ENCODE measurements at regions of chr9 and their contacts with region 1.

Region 1: GRCh38 chr9:101119206-101119819 is 90.8 kb downstream of the PLPPR1 start:
- DNase-seq: peak in 1 of 2 experiments; percentile 92
- H3K4me3 ChIP-seq: no peak overlapping the region
- H3K27ac ChIP-seq: no peak overlapping the region
- H3K4me1 ChIP-seq: peaks cover 0 to 7% (median 3%) of the 10 kb centered on the region in 4 experiments; a peak in 4 of 7 replicates
- H3K27me3 ChIP-seq: no peaks in the 10 kb centered on the region
- CTCF ChIP-seq: peak; percentile 96 to 99 (median 98)
- EP300 ChIP-seq: no peak
- POLR2A ChIP-seq: no peak
- RAD21 ChIP-seq: peak; percentile 96 to 99

Region 2: GRCh38 chr9:101132801-101133200 is 13.5 kb after region 1 on chr9:
- CTCF ChIA-PET with region 1: interaction called, 23 read pairs
- POLR2A ChIA-PET with region 1: no interaction called
- DNase-seq: no peak
- H3K4me3 ChIP-seq: no peak overlapping the region
- H3K27ac ChIP-seq: no peak overlapping the region
- H3K4me1 ChIP-seq: peaks cover 2 to 5% (median 4%) of the 10 kb centered on the region in 4 experiments; a peak in 3 of 7 replicates
- H3K27me3 ChIP-seq: no peaks in the 10 kb centered on the region
- CTCF ChIP-seq: no peak
- EP300 ChIP-seq: no peak
- POLR2A ChIP-seq: no peak
- RAD21 ChIP-seq: no peak

Region 3: DNA sequence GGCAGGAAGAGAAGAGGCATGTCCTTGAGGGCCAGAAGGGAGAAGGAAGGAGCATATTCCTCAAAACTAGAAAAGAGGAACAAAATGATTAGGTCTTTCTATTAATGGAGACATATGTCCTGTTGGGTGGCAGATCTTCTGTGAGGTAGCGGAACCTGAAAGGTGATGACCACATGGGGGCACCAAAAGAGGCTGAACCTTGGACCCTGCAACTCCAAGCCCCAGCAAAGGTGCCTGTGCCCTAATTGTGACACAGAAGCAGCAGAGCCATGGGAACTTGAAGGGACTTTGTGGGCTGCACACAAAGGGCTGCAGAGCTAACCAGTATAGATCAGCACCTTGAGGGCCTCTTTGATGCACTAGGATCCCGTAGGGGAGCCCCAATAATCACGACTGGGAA is 107.5 kb after region 1 on chr9:
- CTCF ChIA-PET with region 1: interaction called, 70 read pairs
- POLR2A ChIA-PET with region 1: interaction called, 3 read pairs
- DNase-seq: no peak
- H3K4me3 ChIP-seq: no peak overlapping the region
- H3K27ac ChIP-seq: no peak overlapping the region
- H3K4me1 ChIP-seq: peaks cover 0 to 8% (median 0%) of the 10 kb centered on the region in 4 experiments; a peak in 2 of 7 replicates
- H3K27me3 ChIP-seq: no peaks in the 10 kb centered on the region
- CTCF ChIP-seq: peak in 2 of 3 experiments; percentile 22 to 36; a peak in 1 of 4 replicates
- EP300 ChIP-seq: no peak
- POLR2A ChIP-seq: no peak
- RAD21 ChIP-seq: peak; percentile 20 to 40; a peak in 2 of 4 replicates

Region 4: GRCh38 chr9:101235105-101235866 is 116.0 kb after region 1 on chr9:
- CTCF ChIA-PET with region 1: interaction called, 70 read pairs
- POLR2A ChIA-PET with region 1: interaction called, 3 read pairs
- DNase-seq: no peak
- H3K4me3 ChIP-seq: no peak overlapping the region
- H3K27ac ChIP-seq: no peak overlapping the region
- H3K4me1 ChIP-seq: peaks cover 0 to 20% (median 2%) of the 10 kb centered on the region in 4 experiments; a peak in 4 of 7 replicates
- H3K27me3 ChIP-seq: no peaks in the 10 kb centered on the region
- CTCF ChIP-seq: peak in 2 of 3 experiments; percentile 55 to 58; a peak in 2 of 4 replicates
- EP300 ChIP-seq: no peak
- POLR2A ChIP-seq: no peak
- RAD21 ChIP-seq: peak; percentile 89 to 92

Region 5: DNA sequence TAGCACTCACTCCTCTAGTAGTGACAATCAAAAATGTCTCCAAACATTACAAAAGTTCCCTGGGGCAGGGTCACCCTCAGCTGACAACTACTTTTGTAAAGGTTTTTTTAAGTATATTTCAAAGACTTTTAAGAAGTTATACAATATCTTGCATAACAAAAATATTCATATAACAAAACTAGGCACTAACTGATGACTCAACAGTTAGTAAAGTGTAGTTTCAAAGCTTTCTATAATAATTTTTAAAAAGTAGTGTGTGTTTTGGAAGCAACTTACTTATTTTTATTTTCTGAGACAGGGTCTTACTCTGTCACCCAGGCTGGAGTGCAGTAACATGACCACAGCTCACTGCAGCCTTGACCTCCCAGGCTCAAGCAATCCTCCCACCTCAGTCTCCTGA is 180.6 kb after region 1 on chr9:
- CTCF ChIA-PET with region 1: interaction called, 14 read pairs
- POLR2A ChIA-PET with region 1: no interaction called
- DNase-seq: no peak
- H3K4me3 ChIP-seq: no peak overlapping the region
- H3K27ac ChIP-seq: no peak overlapping the region
- H3K4me1 ChIP-seq: peaks cover 0 to 3% (median 1%) of the 10 kb centered on the region in 4 experiments; a peak in 1 of 7 replicates
- H3K27me3 ChIP-seq: no peaks in the 10 kb centered on the region
- CTCF ChIP-seq: no peak
- EP300 ChIP-seq: no peak
- POLR2A ChIP-seq: no peak
- RAD21 ChIP-seq: no peak

Region 6: GRCh38 chr9:101311758-101312420 is 192.6 kb after region 1 on chr9:
- CTCF ChIA-PET with region 1: interaction called, 34 read pairs
- POLR2A ChIA-PET with region 1: no interaction called
- DNase-seq: no peak
- H3K4me3 ChIP-seq: no peak overlapping the region
- H3K27ac ChIP-seq: no peak overlapping the region
- H3K4me1 ChIP-seq: no peaks in the 10 kb centered on the region
- H3K27me3 ChIP-seq: no peaks in the 10 kb centered on the region
- CTCF ChIP-seq: peak in 2 of 3 experiments; percentile 53 to 65; a peak in 2 of 4 replicates
- EP300 ChIP-seq: no peak
- POLR2A ChIP-seq: no peak
- RAD21 ChIP-seq: peak; percentile 80 to 83

Measured in H1 (cell line).